ENCODE measurements at regions of chr5 and their contacts with region 1.

Region 1: GRCh38 chr5:124649491-124650146 is 96.8 kb downstream of the ZNF608 start:
- DNase-seq: peak in 18 of 42 donors; percentile 18 to 67 (median 54)

Region 2: GRCh38 chr5:124614105-124614504 is 35.5 kb before region 1 on chr5:
- intact Hi-C with region 1: no loop called
- DNase-seq: no peak

Region 3: GRCh38 chr5:124741711-124742496 is 92.3 kb after region 1 on chr5:
- intact Hi-C with region 1: loop called (anchors 5 kb)
- DNase-seq: no peak

Measured in head of caudate nucleus (tissue), 42 donors.